Naive thymus-derived CD4-positive, alpha-beta T cell (primary cell): ENCODE measurements at regions of chr5 and their contacts with region 1.

Region 1: GRCh38 chr5:180860887-180861822 is at the start of gene ZFP62:
- DNase-seq: peak; percentile 66 to 90 (median 82)
- ATAC-seq: peak; percentile 92
- H3K4me3 ChIP-seq: peak within 1 kb of the TSS; percentile 100
- H3K4me3 Mint-ChIP-seq: peak within 1 kb of the TSS; percentile 88 to 96 (median 91)
- H3K27ac ChIP-seq: peak within 1 kb of the TSS; percentile 83
- H3K27ac Mint-ChIP-seq: peak within 1 kb of the TSS; percentile 82 to 96 (median 94)
- H3K4me1 ChIP-seq: peaks cover 8 to 9% of the 10 kb centered on the region in 2 donors
- H3K4me1 Mint-ChIP-seq: peaks cover 19 to 32% (median 24%) of the 10 kb centered on the region in 7 donors
- H3K27me3 ChIP-seq: no peaks in the 10 kb centered on the region
- H3K27me3 Mint-ChIP-seq: peaks cover 0 to 10% (median 0%) of the 10 kb centered on the region in 5 donors
- total RNA-seq, gene ZFP62: 25.9 to 80.4 (median 36.4) TPM

Region 2: GRCh38 chr5:180784497-180785097 is 76.6 kb before region 1 on chr5:
- CTCF ChIA-PET with region 1: interaction called, 3 read pairs
- POLR2A ChIA-PET with region 1: interaction called, 4 read pairs
- intact Hi-C with region 1: loop called (anchors 1 to 5 kb)
- DNase-seq: peak; percentile 45 to 78 (median 65)
- ATAC-seq: peak; percentile 87
- H3K4me3 ChIP-seq: no peak overlapping the region
- H3K4me3 Mint-ChIP-seq: no peak overlapping the region
- H3K27ac ChIP-seq: no peak overlapping the region
- H3K27ac Mint-ChIP-seq: peak overlapping the region in 6 of 9 donors; percentile 8 to 76 (median 33)
- H3K4me1 ChIP-seq: peaks cover 0 to 7% of the 10 kb centered on the region in 2 donors
- H3K4me1 Mint-ChIP-seq: peaks cover 23 to 58% (median 46%) of the 10 kb centered on the region in 7 donors
- H3K27me3 ChIP-seq: no peaks in the 10 kb centered on the region
- H3K27me3 Mint-ChIP-seq: no peaks in the 10 kb centered on the region

Region 3: DNA sequence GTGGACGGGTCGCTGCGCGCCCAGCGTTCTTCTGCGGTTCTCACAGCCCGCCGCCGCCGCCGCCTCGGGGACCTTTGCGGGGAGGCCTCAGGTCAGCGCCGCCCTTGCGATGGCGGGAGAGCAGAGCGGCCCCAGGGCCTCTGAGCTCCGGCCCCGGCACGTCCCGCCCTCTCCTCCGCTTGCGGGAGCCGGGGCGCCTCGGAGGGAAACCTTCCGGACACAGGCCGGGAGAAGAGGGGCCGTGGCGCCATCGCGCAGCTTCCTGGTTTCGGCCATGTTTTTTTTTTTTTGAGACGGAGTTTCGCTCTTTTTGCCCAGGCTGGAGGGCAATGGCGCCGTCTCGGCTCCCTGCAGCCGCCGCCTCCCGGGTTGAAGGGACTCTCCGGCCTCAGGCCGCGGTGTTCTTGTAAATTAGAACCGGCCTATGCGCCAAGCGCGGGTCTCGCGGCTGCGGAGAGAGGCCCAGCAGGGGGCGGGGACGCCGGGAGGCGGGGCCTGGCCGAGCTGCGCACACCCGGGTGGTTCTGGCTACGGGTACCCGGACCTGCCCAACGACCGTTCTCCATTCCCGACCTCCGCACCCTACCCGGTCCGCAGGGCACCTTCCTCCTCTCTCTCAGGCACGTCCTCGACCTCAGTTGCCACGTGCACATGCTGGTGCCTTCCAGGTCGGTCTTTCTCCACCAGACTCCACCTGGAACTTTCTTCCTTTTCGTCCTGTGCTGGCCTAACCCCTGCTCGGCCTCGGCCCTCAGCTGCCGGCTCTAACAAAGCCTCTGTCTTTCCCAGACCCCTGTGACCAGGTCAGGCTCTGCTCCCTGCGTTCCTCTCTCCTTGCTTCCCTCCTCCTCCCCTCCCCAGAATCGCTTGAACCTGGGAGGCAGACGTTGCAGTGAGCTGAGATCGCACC is 29.8 kb before region 1 on chr5:
- CTCF ChIA-PET with region 1: interaction called, 3 read pairs
- POLR2A ChIA-PET with region 1: interaction called, 44 read pairs
- intact Hi-C with region 1: loop called (anchors 1 kb)
- DNase-seq: peak; percentile 60 to 85 (median 70)
- ATAC-seq: peak; percentile 76
- H3K4me3 ChIP-seq: peak overlapping the region; percentile 62
- H3K4me3 Mint-ChIP-seq: peak overlapping the region; percentile 97 to 100 (median 98)
- H3K27ac ChIP-seq: peak overlapping the region; percentile 95
- H3K27ac Mint-ChIP-seq: peak overlapping the region; percentile 96 to 100 (median 98)
- H3K4me1 ChIP-seq: peaks cover 29 to 32% of the 10 kb centered on the region in 2 donors
- H3K4me1 Mint-ChIP-seq: peaks cover 35 to 67% (median 58%) of the 10 kb centered on the region in 7 donors
- H3K27me3 ChIP-seq: no peaks in the 10 kb centered on the region
- H3K27me3 Mint-ChIP-seq: no peaks in the 10 kb centered on the region

Region 4: GRCh38 chr5:180885872-180886418 is 24.8 kb after region 1 on chr5:
- CTCF ChIA-PET with region 1: no interaction called
- POLR2A ChIA-PET with region 1: no interaction called
- intact Hi-C with region 1: no loop called
- DNase-seq: no peak
- ATAC-seq: no peak
- H3K4me3 ChIP-seq: no peak overlapping the region
- H3K4me3 Mint-ChIP-seq: no peak overlapping the region
- H3K27ac ChIP-seq: no peak overlapping the region
- H3K27ac Mint-ChIP-seq: no peak overlapping the region
- H3K4me1 ChIP-seq: no peaks in the 10 kb centered on the region
- H3K4me1 Mint-ChIP-seq: peaks cover 0 to 2% (median 0%) of the 10 kb centered on the region in 7 donors
- H3K27me3 ChIP-seq: peaks cover 0 to 2% of the 10 kb centered on the region in 2 donors
- H3K27me3 Mint-ChIP-seq: peaks cover 37 to 67% (median 53%) of the 10 kb centered on the region in 5 donors

Region 5: GRCh38 chr5:180950291-180950949 is 89.3 kb after region 1 on chr5:
- CTCF ChIA-PET with region 1: no interaction called
- POLR2A ChIA-PET with region 1: no interaction called
- intact Hi-C with region 1: no loop called
- DNase-seq: no peak
- ATAC-seq: no peak
- H3K4me3 ChIP-seq: no peak overlapping the region
- H3K4me3 Mint-ChIP-seq: no peak overlapping the region
- H3K27ac ChIP-seq: no peak overlapping the region
- H3K27ac Mint-ChIP-seq: no peak overlapping the region
- H3K4me1 ChIP-seq: no peaks in the 10 kb centered on the region
- H3K4me1 Mint-ChIP-seq: peaks cover 0 to 4% (median 0%) of the 10 kb centered on the region in 7 donors
- H3K27me3 ChIP-seq: no peaks in the 10 kb centered on the region
- H3K27me3 Mint-ChIP-seq: peaks cover 0 to 6% (median 3%) of the 10 kb centered on the region in 5 donors

Region 6: GRCh38 chr5:181159286-181159829 is 298.2 kb after region 1 on chr5:
- CTCF ChIA-PET with region 1: no interaction called
- POLR2A ChIA-PET with region 1: no interaction called
- intact Hi-C with region 1: loop called (anchors 1 to 10 kb)
- DNase-seq: peak; percentile 79 to 95 (median 87)
- ATAC-seq: peak; percentile 80
- H3K4me3 ChIP-seq: no peak overlapping the region
- H3K4me3 Mint-ChIP-seq: peak overlapping the region; percentile 57 to 83 (median 72)
- H3K27ac ChIP-seq: peak overlapping the region; percentile 89
- H3K27ac Mint-ChIP-seq: peak overlapping the region; percentile 73 to 97 (median 94)
- H3K4me1 ChIP-seq: peaks cover 15 to 19% of the 10 kb centered on the region in 2 donors
- H3K4me1 Mint-ChIP-seq: peaks cover 13 to 33% (median 27%) of the 10 kb centered on the region in 7 donors
- H3K27me3 ChIP-seq: no peaks in the 10 kb centered on the region
- H3K27me3 Mint-ChIP-seq: peaks cover 0 to 29% (median 17%) of the 10 kb centered on the region in 5 donors

Region 7: GRCh38 chr5:181243512-181244343 is 382.6 kb after region 1 on chr5 and contains the start of gene RACK1:
- CTCF ChIA-PET with region 1: no interaction called
- POLR2A ChIA-PET with region 1: no interaction called
- intact Hi-C with region 1: loop called in 1 of 2 experiments (anchors 5 kb)
- DNase-seq: peak; percentile 77 to 93 (median 91)
- ATAC-seq: peak; percentile 83
- H3K4me3 ChIP-seq: peak within 1 kb of the TSS; percentile 99
- H3K4me3 Mint-ChIP-seq: peak within 1 kb of the TSS; percentile 91 to 99 (median 98)
- H3K27ac ChIP-seq: peak within 1 kb of the TSS; percentile 91
- H3K27ac Mint-ChIP-seq: peak within 1 kb of the TSS; percentile 93 to 100 (median 97)
- H3K4me1 ChIP-seq: peaks cover 39 to 46% of the 10 kb centered on the region in 2 donors
- H3K4me1 Mint-ChIP-seq: peaks cover 45 to 78% (median 66%) of the 10 kb centered on the region in 7 donors
- H3K27me3 ChIP-seq: no peaks in the 10 kb centered on the region
- H3K27me3 Mint-ChIP-seq: no peaks in the 10 kb centered on the region
- total RNA-seq, gene RACK1: 1,703 to 2,739 (median 2,322) TPM